ENCODE measurements at regions of chr5 and their contacts with region 1.

Region 1: DNA sequence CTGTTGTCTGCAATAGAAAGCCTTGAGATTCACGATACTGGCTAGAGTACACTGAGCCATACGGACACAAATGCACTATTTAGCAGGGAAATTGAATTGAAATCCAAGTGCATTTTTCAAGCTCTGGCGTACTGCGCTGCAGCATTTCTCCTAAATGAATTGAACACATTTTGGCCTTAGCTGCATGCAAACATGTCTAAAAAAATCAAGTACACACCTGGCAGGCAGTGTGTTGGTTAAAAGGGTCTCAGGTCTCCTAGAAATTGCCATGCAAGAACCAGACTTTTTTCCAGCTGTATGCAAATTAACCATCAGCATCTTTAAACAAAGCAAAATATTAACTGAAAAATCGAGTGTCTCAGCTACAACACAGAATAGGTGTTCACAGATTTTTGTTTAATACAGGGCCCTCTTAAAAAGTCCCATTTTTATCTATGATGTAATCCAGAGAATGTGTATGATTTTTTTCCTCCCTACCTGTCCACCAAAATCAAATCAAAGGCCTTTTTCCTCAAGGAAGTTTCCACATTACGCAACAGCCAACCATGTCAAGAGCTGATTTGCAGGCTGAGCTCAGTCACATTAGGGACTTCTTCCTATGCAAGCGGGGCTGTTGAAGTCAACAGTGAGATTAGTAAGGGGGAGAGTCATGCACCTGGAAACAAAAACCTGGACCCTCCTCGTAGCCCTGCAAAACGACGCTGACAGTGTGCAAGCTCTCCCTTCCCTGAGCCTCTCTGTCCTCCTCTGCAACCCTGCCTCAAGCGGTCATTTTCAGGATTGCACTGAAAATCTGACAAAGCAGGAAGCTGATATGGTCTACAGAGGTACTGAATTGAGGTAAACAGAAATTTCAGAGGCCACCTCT is 14.1 kb upstream of the SFXN1 start:
- DNase-seq: peak; percentile 90
- H3K4me3 Mint-ChIP-seq: no peak overlapping the region
- H3K27ac Mint-ChIP-seq: no peak overlapping the region
- H3K4me1 Mint-ChIP-seq: peaks cover 16% of the 10 kb centered on the region
- H3K27me3 Mint-ChIP-seq: no peaks in the 10 kb centered on the region

Region 2: GRCh38 chr5:175436359-175436758 is 27.9 kb before region 1 on chr5:
- CTCF ChIA-PET with region 1: no interaction called
- intact Hi-C with region 1: no loop called
- DNase-seq: no peak
- H3K4me3 Mint-ChIP-seq: no peak overlapping the region
- H3K27ac Mint-ChIP-seq: no peak overlapping the region
- H3K4me1 Mint-ChIP-seq: no peaks in the 10 kb centered on the region
- H3K27me3 Mint-ChIP-seq: peaks cover 7% of the 10 kb centered on the region

Region 3: GRCh38 chr5:175508896-175509295 is 44.6 kb after region 1 on chr5:
- CTCF ChIA-PET with region 1: interaction called, 11 read pairs
- intact Hi-C with region 1: no loop called
- DNase-seq: no peak
- H3K4me3 Mint-ChIP-seq: no peak overlapping the region
- H3K27ac Mint-ChIP-seq: peak overlapping the region; percentile 26
- H3K4me1 Mint-ChIP-seq: peaks cover 45% of the 10 kb centered on the region
- H3K27me3 Mint-ChIP-seq: no peaks in the 10 kb centered on the region